Ovary (tissue), 10 donors: ENCODE measurements at regions of chr6 and their contacts with region 1.

Region 1: DNA sequence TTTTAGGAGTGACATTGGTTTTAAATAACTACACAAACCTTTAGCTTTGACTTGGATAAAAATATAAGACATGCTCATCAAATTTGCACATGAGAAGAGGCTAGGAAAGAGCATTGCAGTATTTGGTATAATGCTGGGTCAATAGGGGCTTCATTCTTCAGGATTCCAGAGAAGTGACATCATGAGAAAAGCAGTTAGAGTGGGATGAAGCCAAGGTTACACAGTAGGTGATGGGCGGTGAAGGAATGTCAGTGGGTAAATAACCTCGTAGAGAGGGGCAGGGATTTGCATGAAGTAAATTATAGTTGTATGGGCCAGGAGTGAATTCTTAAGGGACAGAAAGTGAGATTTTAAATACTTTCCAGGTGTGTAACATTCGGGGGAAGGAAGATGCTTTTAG is 216.2 kb downstream of the RFPL4B start:
- DNase-seq: no peak
- H3K4me3 ChIP-seq: no peak overlapping the region
- H3K27ac ChIP-seq: peak overlapping the region; percentile 23 to 67
- H3K4me1 ChIP-seq: peaks cover 2% of the 10 kb centered on the region
- H3K27me3 ChIP-seq: no peaks in the 10 kb centered on the region
- CTCF ChIP-seq: no peak
- EP300 ChIP-seq: no peak
- POLR2A ChIP-seq: no peak

Region 2: GRCh38 chr6:110944681-110945151 is 1618.7 kb before region 1 on chr6:
- intact Hi-C with region 1: no loop called
- DNase-seq: no peak
- H3K4me3 ChIP-seq: no peak overlapping the region
- H3K27ac ChIP-seq: no peak overlapping the region
- H3K4me1 ChIP-seq: no peaks in the 10 kb centered on the region
- H3K27me3 ChIP-seq: no peaks in the 10 kb centered on the region
- CTCF ChIP-seq: no peak
- EP300 ChIP-seq: no peak
- POLR2A ChIP-seq: no peak

Region 3: DNA sequence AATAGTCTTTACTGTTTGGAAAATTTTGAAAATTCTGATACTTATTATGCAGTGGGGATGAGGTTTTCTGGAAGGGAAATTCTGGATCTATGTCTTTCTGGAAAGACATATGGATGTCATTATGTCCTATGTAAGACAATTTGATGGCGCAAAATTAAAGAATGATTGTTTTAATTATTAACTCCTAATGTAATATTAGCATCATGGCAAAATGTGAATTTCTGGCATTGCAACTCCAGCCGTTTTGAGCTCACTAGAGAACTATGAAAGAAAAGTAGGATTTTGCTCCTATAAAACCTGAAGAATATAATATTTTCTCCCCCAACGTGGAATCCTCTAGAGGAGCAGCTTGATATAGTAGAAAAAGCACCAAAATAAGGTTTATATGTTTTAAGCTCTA is 27.0 kb after region 1 on chr6:
- intact Hi-C with region 1: loop called in 1 of 4 experiments (anchors 1 kb)
- DNase-seq: no peak
- H3K4me3 ChIP-seq: no peak overlapping the region
- H3K27ac ChIP-seq: no peak overlapping the region
- H3K4me1 ChIP-seq: no peaks in the 10 kb centered on the region
- H3K27me3 ChIP-seq: no peaks in the 10 kb centered on the region
- CTCF ChIP-seq: no peak
- EP300 ChIP-seq: no peak
- POLR2A ChIP-seq: no peak

Region 4: GRCh38 chr6:112618849-112619248 is 55.5 kb after region 1 on chr6:
- intact Hi-C with region 1: no loop called
- DNase-seq: peak in 4 of 5 donors; percentile 22 to 46 (median 32)
- H3K4me3 ChIP-seq: no peak overlapping the region
- H3K27ac ChIP-seq: no peak overlapping the region
- H3K4me1 ChIP-seq: no peaks in the 10 kb centered on the region
- H3K27me3 ChIP-seq: no peaks in the 10 kb centered on the region
- CTCF ChIP-seq: no peak
- EP300 ChIP-seq: no peak
- POLR2A ChIP-seq: no peak

Region 5: DNA sequence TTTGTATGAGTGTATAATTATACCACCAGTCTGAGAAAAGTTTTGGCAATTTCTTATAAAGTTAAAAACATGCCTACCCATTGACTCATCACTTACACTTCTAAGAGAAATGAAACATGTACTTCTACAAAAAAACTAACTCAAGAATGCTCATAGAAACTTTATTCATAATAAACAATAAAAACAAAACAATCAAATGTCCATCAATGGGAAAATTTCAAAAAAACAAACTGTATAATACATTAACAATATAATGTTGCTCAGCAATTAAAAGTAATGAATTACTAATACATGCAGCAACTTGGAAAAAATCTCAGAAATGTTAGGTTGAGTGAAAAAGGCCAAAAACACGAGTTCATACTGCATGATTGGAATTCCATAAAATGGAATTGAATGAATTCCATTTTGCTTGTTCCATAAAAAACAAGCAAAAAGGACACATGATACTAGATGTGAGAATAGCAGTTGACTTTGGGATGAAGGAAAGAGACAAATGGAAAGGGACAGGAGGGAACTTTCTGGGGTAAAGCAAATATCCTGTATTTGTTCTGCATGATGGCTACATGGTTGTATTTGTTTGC is 510.3 kb after region 1 on chr6:
- intact Hi-C with region 1: no loop called
- DNase-seq: no peak
- H3K4me3 ChIP-seq: no peak overlapping the region
- H3K27ac ChIP-seq: no peak overlapping the region
- H3K4me1 ChIP-seq: no peaks in the 10 kb centered on the region
- H3K27me3 ChIP-seq: no peaks in the 10 kb centered on the region
- CTCF ChIP-seq: no peak
- EP300 ChIP-seq: no peak
- POLR2A ChIP-seq: no peak